ENCODE measurements at regions of chr17 and their contacts with region 1.

Region 1: DNA sequence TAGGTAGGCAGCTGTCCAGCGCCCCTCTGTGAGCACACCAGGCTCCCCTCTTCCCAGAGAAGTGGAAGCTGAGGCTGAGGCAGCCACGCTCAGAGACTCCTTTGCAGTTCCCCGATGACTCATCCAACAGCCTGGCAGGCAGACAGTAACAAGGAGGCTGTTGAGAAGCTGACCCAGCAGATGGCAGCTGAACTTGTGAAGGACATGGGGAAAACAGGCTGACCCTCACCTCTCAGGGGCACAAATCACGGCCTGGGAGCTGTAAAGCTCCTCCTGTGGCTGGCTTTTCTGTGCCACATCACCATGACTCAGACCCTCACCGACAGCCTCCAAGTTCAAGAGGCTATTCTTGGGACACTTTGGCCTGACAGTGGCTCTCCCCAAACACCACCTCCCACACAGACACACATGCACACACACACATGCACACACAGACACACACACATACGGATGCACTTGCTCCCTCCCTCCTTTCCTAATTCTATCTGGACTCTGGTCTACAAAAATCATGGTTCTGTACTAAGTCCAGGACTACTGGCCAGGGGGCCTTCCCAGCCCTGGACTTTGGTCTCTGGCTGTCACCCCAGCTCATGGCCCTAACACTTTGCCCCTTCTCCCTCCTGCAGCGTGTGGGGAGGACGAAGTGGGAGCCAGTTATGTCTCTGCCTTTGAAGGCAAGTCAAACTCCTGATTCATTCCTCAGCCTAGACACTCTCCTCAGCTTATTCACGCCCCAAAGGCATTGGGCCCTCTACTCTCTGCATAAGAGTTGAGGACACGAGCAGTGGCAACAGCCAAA is 23.2 kb downstream of the MAP3K14 start:
- DNase-seq: peak; percentile 58
- ATAC-seq: peak; percentile 65
- H3K4me3 ChIP-seq: no peak overlapping the region
- H3K27ac ChIP-seq: peak overlapping the region; percentile 30
- H3K4me1 ChIP-seq: peaks cover 27% of the 10 kb centered on the region
- H3K27me3 ChIP-seq: no peaks in the 10 kb centered on the region
- CTCF ChIP-seq: peak; percentile 45
- EP300 ChIP-seq: no peak
- POLR2A ChIP-seq: no peak
- RAD21 ChIP-seq: no peak

Region 2: GRCh38 chr17:45311760-45312476 is 18.3 kb after region 1 on chr17:
- CTCF ChIA-PET with region 1: no interaction called
- POLR2A ChIA-PET with region 1: interaction called, 28 read pairs
- in situ Hi-C with region 1: no loop called
- intact Hi-C with region 1: no loop called
- DNase-seq: peak; percentile 96
- ATAC-seq: peak; percentile 81
- H3K4me3 ChIP-seq: peak overlapping the region; percentile 21 to 64 (median 29); a peak in 5 of 6 replicates
- H3K27ac ChIP-seq: peak overlapping the region; percentile 78
- H3K4me1 ChIP-seq: peaks cover 73% of the 10 kb centered on the region
- H3K27me3 ChIP-seq: no peaks in the 10 kb centered on the region
- CTCF ChIP-seq: peak; percentile 22; the same call in 1 of the 2 replicates
- EP300 ChIP-seq: peak in 1 of 2 experiments; percentile 63; a peak in 1 of 4 replicates
- POLR2A ChIP-seq: no peak
- RAD21 ChIP-seq: peak; percentile 53

Region 3: DNA sequence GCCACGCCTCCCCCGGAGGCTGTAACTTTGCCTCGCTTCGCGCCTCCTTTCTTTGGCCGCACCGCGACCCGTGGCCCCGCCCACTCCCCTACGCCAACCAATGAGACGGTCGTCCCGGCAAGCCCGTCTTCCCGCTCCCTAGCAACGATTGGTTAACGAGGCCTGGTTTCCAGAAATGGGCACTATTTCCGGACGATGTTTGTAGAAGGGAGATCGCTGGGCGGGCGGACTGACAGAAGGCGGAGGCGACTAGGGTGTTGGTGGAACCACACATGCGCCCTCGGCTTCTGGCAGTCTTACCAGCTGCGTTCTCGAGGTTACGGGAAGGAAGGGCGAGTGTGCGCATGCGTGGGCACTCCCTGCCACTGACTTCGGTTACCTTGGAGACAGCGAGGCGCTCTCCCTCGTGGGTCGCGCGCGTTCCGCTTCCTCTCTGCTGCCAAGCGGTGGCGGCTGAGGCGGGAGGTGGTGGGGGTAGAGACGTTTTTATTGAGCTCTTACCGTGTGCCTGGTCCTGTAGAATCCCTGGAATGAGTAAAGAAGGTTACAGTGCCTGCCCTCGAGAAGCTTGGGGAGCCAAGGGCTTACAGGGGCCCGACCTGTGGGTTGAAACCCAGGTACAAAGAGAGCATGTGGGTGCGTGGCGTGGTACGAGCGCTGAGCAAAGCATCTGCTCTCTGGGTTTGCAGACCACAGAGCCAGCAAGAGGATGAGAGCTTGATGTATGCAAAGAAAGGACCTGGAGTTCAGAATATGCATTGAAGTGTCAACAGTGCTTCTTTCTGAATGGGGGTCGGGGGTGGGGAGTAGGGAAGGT is 23.7 kb after region 1 on chr17:
- CTCF ChIA-PET with region 1: no interaction called
- POLR2A ChIA-PET with region 1: interaction called, 28 read pairs
- in situ Hi-C with region 1: no loop called
- intact Hi-C with region 1: no loop called
- DNase-seq: peak; percentile 100
- ATAC-seq: peak; percentile 88
- H3K4me3 ChIP-seq: peak overlapping the region; percentile 43 to 86 (median 67)
- H3K27ac ChIP-seq: peak overlapping the region; percentile 47
- H3K4me1 ChIP-seq: peaks cover 59% of the 10 kb centered on the region
- H3K27me3 ChIP-seq: peaks cover 2 to 36% of the 10 kb centered on the region in 2 experiments; a peak in 3 of 5 replicates
- CTCF ChIP-seq: peak; percentile 37
- EP300 ChIP-seq: no peak; a peak in 1 of 4 replicates
- POLR2A ChIP-seq: peak in 1 of 2 experiments; percentile 24; a peak in 1 of 4 replicates
- RAD21 ChIP-seq: 0 out of 2 replicates have a peak, but pooled peaks have one; percentile 28

Measured in HepG2 (cell line).